ENCODE measurements at regions of chr19 and their contacts with region 1.

Region 1: GRCh38 chr19:17075035-17075863 is at the starts of genes HAUS8 and MYO9B:
- DNase-seq: peak; percentile 96 to 100 (median 100)
- ATAC-seq: peak; percentile 98
- H3K4me3 ChIP-seq: peak within 1 kb of the TSS; percentile 94
- H3K4me3 Mint-ChIP-seq: peak within 1 kb of the TSS; percentile 96 to 100 (median 98)
- H3K27ac ChIP-seq: peak within 1 kb of the TSS; percentile 88
- H3K27ac Mint-ChIP-seq: peak within 1 kb of the TSS; percentile 86 to 99 (median 97)
- H3K4me1 ChIP-seq: peaks cover 28 to 32% of the 10 kb centered on the region in 2 donors
- H3K4me1 Mint-ChIP-seq: peaks cover 45 to 65% (median 55%) of the 10 kb centered on the region in 7 donors
- H3K27me3 ChIP-seq: no peaks in the 10 kb centered on the region
- H3K27me3 Mint-ChIP-seq: no peaks in the 10 kb centered on the region
- total RNA-seq, gene HAUS8: 16.7 to 31.5 (median 19.3) TPM
- total RNA-seq, gene MYO9B: 154 to 297 (median 205) TPM

Region 2: DNA sequence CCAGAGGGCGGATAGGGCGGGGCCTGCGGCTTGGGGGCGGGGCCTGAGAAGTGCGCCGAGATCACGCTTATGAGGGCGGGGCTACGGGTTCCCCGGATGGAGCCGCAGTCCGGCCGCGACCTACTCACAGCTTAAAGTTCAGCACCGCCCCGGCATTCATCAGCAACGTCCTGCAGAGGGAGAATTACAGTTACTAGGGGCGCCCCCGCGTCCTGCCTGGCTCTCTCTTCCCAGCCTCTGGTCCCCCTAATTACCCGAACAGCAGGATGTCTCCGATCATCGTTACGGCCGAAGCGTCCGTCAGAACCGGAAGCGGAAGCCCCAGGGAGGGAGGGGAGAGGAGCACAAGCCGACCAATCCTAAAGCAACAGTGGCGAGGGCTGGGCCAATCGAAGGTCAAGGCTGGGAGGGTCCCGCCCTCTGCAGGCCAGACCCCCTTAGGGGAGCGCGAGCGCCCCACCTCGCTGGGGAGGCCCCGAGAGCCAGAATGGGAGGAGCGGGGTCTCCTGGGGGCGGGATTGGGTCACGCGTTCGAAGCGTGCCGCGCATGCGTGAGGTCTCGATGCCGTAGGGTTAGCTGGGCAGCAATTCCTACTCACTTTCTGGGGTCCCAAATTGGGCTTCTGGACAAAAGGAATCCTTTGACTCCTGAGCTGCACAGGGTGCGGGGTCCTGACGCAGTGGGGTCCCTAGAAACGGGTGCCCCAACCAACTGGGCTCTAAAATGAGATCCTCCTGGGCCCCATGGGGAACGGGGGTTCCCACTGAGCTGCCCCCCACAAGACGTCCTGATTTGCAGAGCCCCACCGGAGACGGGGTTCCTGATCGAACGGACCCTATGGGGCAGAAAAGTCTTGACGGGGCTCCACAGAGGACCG is 415.2 kb before region 1 on chr19 and contains the start of gene SMIM7:
- CTCF ChIA-PET with region 1: no interaction called
- POLR2A ChIA-PET with region 1: no interaction called
- intact Hi-C with region 1: loop called (anchors 1 kb)
- DNase-seq: peak; percentile 95 to 100 (median 99)
- ATAC-seq: peak; percentile 98
- H3K4me3 ChIP-seq: peak within 1 kb of the TSS; percentile 74
- H3K4me3 Mint-ChIP-seq: peak within 1 kb of the TSS; percentile 88 to 100 (median 98)
- H3K27ac ChIP-seq: peak within 1 kb of the TSS; percentile 91
- H3K27ac Mint-ChIP-seq: peak within 1 kb of the TSS; percentile 96 to 99 (median 98)
- H3K4me1 ChIP-seq: peaks cover 19 to 30% of the 10 kb centered on the region in 2 donors
- H3K4me1 Mint-ChIP-seq: peaks cover 22 to 55% (median 41%) of the 10 kb centered on the region in 7 donors
- H3K27me3 ChIP-seq: no peaks in the 10 kb centered on the region
- H3K27me3 Mint-ChIP-seq: peaks cover 0 to 24% (median 0%) of the 10 kb centered on the region in 5 donors
- total RNA-seq, gene SMIM7: 56.9 to 108 (median 78.5) TPM

Region 3: GRCh38 chr19:17005000-17005399 is 70.2 kb before region 1 on chr19:
- CTCF ChIA-PET with region 1: no interaction called
- POLR2A ChIA-PET with region 1: no interaction called
- intact Hi-C with region 1: no loop called
- DNase-seq: no peak
- ATAC-seq: no peak
- H3K4me3 ChIP-seq: no peak overlapping the region
- H3K4me3 Mint-ChIP-seq: no peak overlapping the region
- H3K27ac ChIP-seq: no peak overlapping the region
- H3K27ac Mint-ChIP-seq: peak overlapping the region in 3 of 9 donors; percentile 7 to 58 (median 48)
- H3K4me1 ChIP-seq: peaks cover 21% of the 10 kb centered on the region in 2 donors
- H3K4me1 Mint-ChIP-seq: peaks cover 8 to 36% (median 23%) of the 10 kb centered on the region in 7 donors
- H3K27me3 ChIP-seq: no peaks in the 10 kb centered on the region
- H3K27me3 Mint-ChIP-seq: peaks cover 0 to 4% (median 0%) of the 10 kb centered on the region in 5 donors

Region 4: DNA sequence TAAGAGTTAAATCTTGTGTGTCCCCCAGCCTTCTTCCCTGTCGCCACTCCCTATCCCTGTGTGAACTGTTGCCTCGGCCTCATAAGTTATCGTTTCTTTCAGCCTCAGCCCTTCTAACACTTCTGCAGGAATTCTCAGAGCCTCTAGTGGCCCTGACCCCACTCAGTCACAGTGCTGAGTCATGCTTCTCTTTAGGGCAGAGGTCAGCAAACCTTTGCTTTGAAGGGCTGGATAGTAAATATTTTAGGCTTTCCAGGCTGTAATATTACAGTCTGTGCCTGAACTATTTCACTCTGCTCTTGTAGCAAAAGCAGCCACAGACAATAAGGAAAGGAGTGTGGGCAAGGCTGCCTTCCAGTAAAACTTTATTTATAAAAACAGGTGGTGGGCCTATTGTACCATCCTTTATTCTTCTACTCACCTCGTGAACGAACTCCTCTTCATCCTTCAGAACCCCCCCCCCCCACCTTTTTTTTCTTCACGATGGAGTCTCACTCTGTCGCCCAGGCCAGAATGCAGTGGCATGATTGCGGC is 22.4 kb after region 1 on chr19:
- CTCF ChIA-PET with region 1: no interaction called
- POLR2A ChIA-PET with region 1: no interaction called
- intact Hi-C with region 1: no loop called
- DNase-seq: no peak
- ATAC-seq: peak; percentile 29
- H3K4me3 ChIP-seq: no peak overlapping the region
- H3K4me3 Mint-ChIP-seq: no peak overlapping the region
- H3K27ac ChIP-seq: no peak overlapping the region
- H3K27ac Mint-ChIP-seq: peak overlapping the region in 3 of 9 donors; percentile 4 to 21 (median 16)
- H3K4me1 ChIP-seq: no peaks in the 10 kb centered on the region
- H3K4me1 Mint-ChIP-seq: peaks cover 0 to 38% (median 29%) of the 10 kb centered on the region in 7 donors
- H3K27me3 ChIP-seq: no peaks in the 10 kb centered on the region
- H3K27me3 Mint-ChIP-seq: no peaks in the 10 kb centered on the region

Region 5: DNA sequence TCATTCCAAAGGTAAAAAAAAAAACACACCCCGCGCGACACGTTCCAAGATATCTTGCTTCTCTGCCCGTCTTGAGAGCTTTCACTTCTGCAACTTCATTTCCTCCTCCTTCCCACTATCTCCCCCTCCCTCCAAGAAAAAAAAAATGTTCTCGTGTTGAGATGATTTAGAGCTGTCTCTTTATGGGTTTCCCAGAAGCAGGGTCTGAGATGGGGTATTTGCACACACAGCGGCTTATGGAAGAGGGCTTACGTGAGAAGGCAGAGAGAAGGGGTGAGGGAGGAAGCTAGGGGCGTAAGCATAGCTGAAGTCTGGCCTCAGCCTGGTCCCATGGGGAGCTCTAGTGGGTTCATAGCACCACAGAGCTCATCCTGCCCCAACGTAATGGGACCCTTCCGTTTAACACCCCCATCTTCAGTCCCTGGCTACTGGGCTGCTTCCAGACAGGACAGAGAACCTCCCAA is 108.6 kb after region 1 on chr19:
- CTCF ChIA-PET with region 1: no interaction called
- POLR2A ChIA-PET with region 1: interaction called, 33 read pairs
- intact Hi-C with region 1: loop called in 1 of 2 experiments (anchors 2 kb)
- DNase-seq: peak in 6 of 9 donors; percentile 18 to 41 (median 34)
- ATAC-seq: peak; percentile 64
- H3K4me3 ChIP-seq: peak overlapping the region; percentile 75
- H3K4me3 Mint-ChIP-seq: peak overlapping the region; percentile 82 to 94 (median 89)
- H3K27ac ChIP-seq: peak overlapping the region; percentile 68
- H3K27ac Mint-ChIP-seq: peak overlapping the region; percentile 85 to 99 (median 96)
- H3K4me1 ChIP-seq: peaks cover 13 to 16% of the 10 kb centered on the region in 2 donors
- H3K4me1 Mint-ChIP-seq: peaks cover 16 to 29% (median 20%) of the 10 kb centered on the region in 7 donors
- H3K27me3 ChIP-seq: no peaks in the 10 kb centered on the region
- H3K27me3 Mint-ChIP-seq: no peaks in the 10 kb centered on the region

Region 6: GRCh38 chr19:17266975-17267788 is 191.9 kb after region 1 on chr19 and contains the start of gene BABAM1:
- CTCF ChIA-PET with region 1: interaction called, 4 read pairs
- POLR2A ChIA-PET with region 1: interaction called, 4 read pairs
- intact Hi-C with region 1: loop called (anchors 1 kb)
- DNase-seq: peak; percentile 69 to 99 (median 99)
- ATAC-seq: peak; percentile 96
- H3K4me3 ChIP-seq: peak within 1 kb of the TSS; percentile 84
- H3K4me3 Mint-ChIP-seq: peak within 1 kb of the TSS; percentile 68 to 92 (median 84)
- H3K27ac ChIP-seq: peak within 1 kb of the TSS; percentile 76
- H3K27ac Mint-ChIP-seq: peak within 1 kb of the TSS; percentile 69 to 93 (median 82)
- H3K4me1 ChIP-seq: peaks cover 6 to 18% of the 10 kb centered on the region in 2 donors
- H3K4me1 Mint-ChIP-seq: peaks cover 8 to 30% (median 22%) of the 10 kb centered on the region in 7 donors
- H3K27me3 ChIP-seq: no peaks in the 10 kb centered on the region
- H3K27me3 Mint-ChIP-seq: peaks cover 0 to 2% (median 0%) of the 10 kb centered on the region in 5 donors
- total RNA-seq, gene BABAM1: 72.4 to 111 (median 95.6) TPM

Region 7: DNA sequence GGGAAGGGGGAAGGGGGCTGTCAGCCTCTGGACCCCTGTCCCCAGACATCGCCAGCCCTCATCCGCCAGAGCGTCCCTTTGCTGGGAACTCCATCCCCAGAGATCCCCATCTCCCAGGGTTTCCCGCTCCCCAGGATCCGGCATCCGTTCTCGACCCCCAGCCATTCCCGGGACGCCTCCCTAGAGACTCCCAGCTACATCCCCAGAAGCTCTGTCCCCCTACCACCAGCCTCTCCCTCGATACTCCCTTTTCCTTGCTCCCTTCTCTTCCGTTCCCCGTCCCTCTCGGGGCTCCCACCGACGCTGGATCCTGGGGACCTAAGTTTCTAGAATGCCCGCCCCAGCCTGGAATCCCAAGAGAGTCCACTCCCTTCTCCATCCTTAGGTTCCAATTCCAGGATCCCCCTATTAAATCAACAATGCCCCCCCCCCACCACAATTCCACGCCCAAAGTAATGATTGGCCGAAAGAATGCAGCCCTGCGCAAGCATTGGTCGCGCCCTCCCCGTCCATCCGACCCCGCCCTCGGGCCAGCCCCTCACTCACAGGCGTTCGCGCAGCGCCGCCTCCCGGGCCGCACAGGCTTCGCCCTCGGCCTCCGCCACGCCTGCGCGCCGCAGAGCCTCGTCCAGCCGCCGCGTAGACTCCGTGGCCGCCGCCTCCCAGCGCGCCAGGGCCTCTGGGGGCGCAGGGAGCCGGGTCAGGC is 315.6 kb after region 1 on chr19:
- CTCF ChIA-PET with region 1: no interaction called
- POLR2A ChIA-PET with region 1: no interaction called
- intact Hi-C with region 1: loop called in 1 of 2 experiments (anchors 2 kb)
- DNase-seq: peak; percentile 77 to 93 (median 85)
- ATAC-seq: peak; percentile 100
- H3K4me3 ChIP-seq: peak overlapping the region; percentile 84
- H3K4me3 Mint-ChIP-seq: peak overlapping the region; percentile 85 to 98 (median 92)
- H3K27ac ChIP-seq: peak overlapping the region; percentile 2
- H3K27ac Mint-ChIP-seq: peak overlapping the region in 5 of 9 donors; percentile 28 to 92 (median 61)
- H3K4me1 ChIP-seq: peaks cover 15 to 18% of the 10 kb centered on the region in 2 donors
- H3K4me1 Mint-ChIP-seq: peaks cover 6 to 30% (median 20%) of the 10 kb centered on the region in 7 donors
- H3K27me3 ChIP-seq: no peaks in the 10 kb centered on the region
- H3K27me3 Mint-ChIP-seq: peaks cover 0 to 28% (median 0%) of the 10 kb centered on the region in 5 donors

Region 8: GRCh38 chr19:17873786-17874757 is 798.8 kb after region 1 on chr19:
- CTCF ChIA-PET with region 1: no interaction called
- POLR2A ChIA-PET with region 1: no interaction called
- intact Hi-C with region 1: loop called in 1 of 2 experiments (anchors 10 kb)
- DNase-seq: peak; percentile 42 to 75 (median 68)
- ATAC-seq: peak; percentile 92
- H3K4me3 ChIP-seq: peak overlapping the region; percentile 64
- H3K4me3 Mint-ChIP-seq: peak overlapping the region; percentile 73 to 88 (median 84)
- H3K27ac ChIP-seq: peak overlapping the region; percentile 47
- H3K27ac Mint-ChIP-seq: peak overlapping the region; percentile 18 to 85 (median 74)
- H3K4me1 ChIP-seq: peaks cover 10 to 11% of the 10 kb centered on the region in 2 donors
- H3K4me1 Mint-ChIP-seq: peaks cover 0 to 30% (median 10%) of the 10 kb centered on the region in 7 donors
- H3K27me3 ChIP-seq: no peaks in the 10 kb centered on the region
- H3K27me3 Mint-ChIP-seq: peaks cover 0 to 2% (median 0%) of the 10 kb centered on the region in 5 donors

Measured in naive thymus-derived CD4-positive, alpha-beta T cell (primary cell).